ENCODE measurements at regions of chr10 and their contacts with region 1.

Region 1: GRCh38 chr10:114732931-114733330 is 74.9 kb upstream of the ABLIM1 start:
- DNase-seq: no peak
- ATAC-seq: no peak
- H3K4me3 ChIP-seq: no peak overlapping the region
- H3K27ac ChIP-seq: no peak overlapping the region
- H3K4me1 ChIP-seq: no peaks in the 10 kb centered on the region
- H3K27me3 ChIP-seq: no peaks in the 10 kb centered on the region
- CTCF ChIP-seq: no peak
- POLR2A ChIP-seq: no peak
- RAD21 ChIP-seq: no peak

Region 2: GRCh38 chr10:114751856-114752255 is 18.9 kb after region 1 on chr10:
- CTCF ChIA-PET with region 1: no interaction called
- POLR2A ChIA-PET with region 1: no interaction called
- RAD21 ChIA-PET with region 1: no interaction called
- intact Hi-C with region 1: loop called (anchors 2 kb)
- DNase-seq: no peak
- ATAC-seq: no peak
- H3K4me3 ChIP-seq: no peak overlapping the region
- H3K27ac ChIP-seq: no peak overlapping the region
- H3K4me1 ChIP-seq: peaks cover 21 to 25% of the 10 kb centered on the region in 2 experiments
- H3K27me3 ChIP-seq: no peaks in the 10 kb centered on the region
- CTCF ChIP-seq: no peak
- POLR2A ChIP-seq: no peak
- RAD21 ChIP-seq: no peak